Left ventricle myocardium inferior (tissue), 1 donor: ENCODE measurements at regions of chr18 and their contacts with region 1.

Region 1: GRCh38 chr18:3447895-3448837 is 1.8 kb upstream of the TGIF1 start:
- DNase-seq: peak; percentile 95
- H3K4me3 ChIP-seq: peak overlapping the region; percentile 91
- H3K27ac ChIP-seq: peak overlapping the region; percentile 99
- H3K4me1 ChIP-seq: peaks cover 65% of the 10 kb centered on the region
- H3K27me3 ChIP-seq: no peaks in the 10 kb centered on the region
- CTCF ChIP-seq: peak; percentile 9

Region 2: GRCh38 chr18:2917259-2918047 is 530.7 kb before region 1 on chr18:
- intact Hi-C with region 1: loop called (anchors 10 kb)
- DNase-seq: no peak
- H3K4me3 ChIP-seq: no peak overlapping the region
- H3K27ac ChIP-seq: no peak overlapping the region
- H3K4me1 ChIP-seq: peaks cover 20% of the 10 kb centered on the region
- H3K27me3 ChIP-seq: no peaks in the 10 kb centered on the region
- CTCF ChIP-seq: no peak

Region 3: GRCh38 chr18:3261371-3262246 is 186.6 kb before region 1 on chr18 and contains the start of gene MYL12B:
- intact Hi-C with region 1: no loop called
- DNase-seq: peak; percentile 82
- H3K4me3 ChIP-seq: peak within 1 kb of the TSS; percentile 96
- H3K27ac ChIP-seq: peak within 1 kb of the TSS; percentile 99
- H3K4me1 ChIP-seq: peaks cover 97% of the 10 kb centered on the region
- H3K27me3 ChIP-seq: no peaks in the 10 kb centered on the region
- CTCF ChIP-seq: peak; percentile 27
- total RNA-seq, gene MYL12B: 176 TPM

Region 4: DNA sequence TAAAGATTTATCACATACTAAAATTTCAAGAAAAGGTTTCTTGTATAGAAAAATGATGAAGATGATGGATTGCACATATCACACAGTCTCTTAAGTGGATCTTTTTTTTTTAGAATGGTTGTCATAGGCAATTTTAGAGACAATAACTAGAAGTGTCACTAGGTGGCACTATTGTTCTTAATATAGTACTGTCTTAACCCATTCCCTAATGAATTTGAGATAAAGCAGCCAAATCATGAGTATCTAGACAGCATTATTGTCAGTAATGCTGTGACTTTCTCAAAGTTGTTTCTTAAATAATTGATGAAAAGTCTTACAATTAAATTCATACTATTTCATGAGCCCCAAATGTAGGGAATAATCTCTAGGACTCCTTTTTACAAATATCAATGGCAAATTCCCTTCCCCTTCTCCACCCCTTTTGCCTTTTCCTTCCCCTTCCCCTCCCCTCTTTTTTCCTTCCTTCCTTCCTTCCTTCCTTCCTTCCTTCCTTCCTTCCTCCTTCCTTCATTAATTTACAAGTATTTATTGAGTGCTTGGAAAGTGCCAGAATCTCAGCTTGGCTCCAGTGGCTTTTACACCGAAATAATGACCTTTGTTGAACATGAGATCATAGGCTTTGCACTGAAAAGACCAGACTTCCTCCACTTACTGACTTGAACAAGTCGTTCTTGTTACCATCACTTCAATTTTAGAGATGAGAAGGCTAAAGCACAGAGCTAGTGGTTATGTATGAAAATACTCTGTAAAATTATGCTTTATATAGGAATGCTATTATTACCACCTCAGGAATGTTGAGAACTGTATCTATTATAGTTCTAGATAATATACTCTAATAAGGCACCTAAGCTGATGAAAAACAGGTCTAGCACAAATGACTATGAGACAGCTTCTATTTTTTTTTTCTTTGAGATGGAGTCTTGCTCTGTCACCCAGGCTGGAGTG is 166.4 kb before region 1 on chr18:
- intact Hi-C with region 1: loop called (anchors 5 kb)
- DNase-seq: no peak
- H3K4me3 ChIP-seq: peak overlapping the region; percentile 51
- H3K27ac ChIP-seq: peak overlapping the region; percentile 47
- H3K4me1 ChIP-seq: peaks cover 26% of the 10 kb centered on the region
- H3K27me3 ChIP-seq: no peaks in the 10 kb centered on the region
- CTCF ChIP-seq: peak; percentile 79

Region 5: GRCh38 chr18:3401669-3402626 is 46.2 kb before region 1 on chr18:
- intact Hi-C with region 1: no loop called
- DNase-seq: no peak
- H3K4me3 ChIP-seq: no peak overlapping the region
- H3K27ac ChIP-seq: no peak overlapping the region
- H3K4me1 ChIP-seq: no peaks in the 10 kb centered on the region
- H3K27me3 ChIP-seq: no peaks in the 10 kb centered on the region
- CTCF ChIP-seq: no peak